CD4-positive, alpha-beta memory T cell (primary cell): ENCODE measurements at regions of chr4 and their contacts with region 1.

Region 1: GRCh38 chr4:153083447-153083947 is 120.7 kb upstream of the TRIM2 start:
- DNase-seq: peak; percentile 41 to 62 (median 56)
- H3K4me3 ChIP-seq: no peak overlapping the region
- H3K4me3 Mint-ChIP-seq: peak overlapping the region in 6 of 8 donors; percentile 1 to 83 (median 64)
- H3K27ac ChIP-seq: no peak overlapping the region
- H3K27ac Mint-ChIP-seq: peak overlapping the region in 5 of 7 donors; percentile 52 to 88 (median 65)
- H3K4me1 ChIP-seq: peaks cover 57% of the 10 kb centered on the region
- H3K4me1 Mint-ChIP-seq: peaks cover 30 to 56% (median 43%) of the 10 kb centered on the region in 4 donors
- H3K27me3 ChIP-seq: no peaks in the 10 kb centered on the region
- H3K27me3 Mint-ChIP-seq: peaks cover 0 to 3% of the 10 kb centered on the region in 2 donors

Region 2: DNA sequence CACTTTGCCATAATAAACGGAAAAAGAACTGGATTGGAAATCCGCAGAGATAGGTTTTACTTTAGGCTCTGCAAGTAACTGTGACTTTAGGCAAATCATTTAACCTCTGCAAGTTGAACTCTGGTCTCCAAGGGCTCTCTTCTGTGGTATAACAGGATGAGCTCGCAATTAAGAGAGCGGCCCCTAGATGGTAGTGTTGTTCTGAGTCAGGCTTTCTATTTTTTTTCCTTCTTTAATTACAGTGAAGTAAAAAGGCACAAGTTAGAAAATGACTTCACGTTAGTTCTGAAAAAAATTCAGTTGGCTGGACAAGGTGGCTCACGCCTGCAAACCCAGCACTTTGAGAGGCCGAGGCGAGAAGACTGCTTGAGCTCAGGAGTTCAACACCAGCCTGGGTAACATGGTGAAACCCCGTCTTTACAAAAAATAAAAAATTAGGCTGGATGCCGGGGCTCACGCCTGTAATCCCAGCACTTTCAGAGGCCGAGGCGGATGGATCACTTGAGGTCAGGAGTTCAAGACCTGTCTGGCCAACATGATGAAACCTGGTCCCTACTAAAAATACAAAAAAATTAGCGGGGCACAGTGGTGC is 1966.0 kb before region 1 on chr4:
- CTCF ChIA-PET with region 1: no interaction called
- POLR2A ChIA-PET with region 1: no interaction called
- intact Hi-C with region 1: loop called (anchors 10 kb)
- DNase-seq: peak; percentile 37 to 49 (median 45)
- H3K4me3 ChIP-seq: no peak overlapping the region
- H3K4me3 Mint-ChIP-seq: no peak overlapping the region
- H3K27ac ChIP-seq: no peak overlapping the region
- H3K27ac Mint-ChIP-seq: no peak overlapping the region
- H3K4me1 ChIP-seq: no peaks in the 10 kb centered on the region
- H3K4me1 Mint-ChIP-seq: peaks cover 0 to 4% (median 2%) of the 10 kb centered on the region in 4 donors
- H3K27me3 ChIP-seq: no peaks in the 10 kb centered on the region
- H3K27me3 Mint-ChIP-seq: no peaks in the 10 kb centered on the region

Region 3: GRCh38 chr4:152779513-152780266 is 303.8 kb before region 1 on chr4 and contains the starts of genes ARFIP1 and TIGD4:
- CTCF ChIA-PET with region 1: interaction called, 13 read pairs
- POLR2A ChIA-PET with region 1: no interaction called
- intact Hi-C with region 1: loop called (anchors 1 kb)
- DNase-seq: peak; percentile 93 to 95 (median 94)
- H3K4me3 ChIP-seq: peak within 1 kb of the TSS; percentile 94 to 96
- H3K4me3 Mint-ChIP-seq: peak within 1 kb of the TSS; percentile 92 to 100 (median 99)
- H3K27ac ChIP-seq: peak within 1 kb of the TSS; percentile 78
- H3K27ac Mint-ChIP-seq: peak within 1 kb of the TSS; percentile 93 to 99 (median 98)
- H3K4me1 ChIP-seq: peaks cover 27% of the 10 kb centered on the region
- H3K4me1 Mint-ChIP-seq: peaks cover 28 to 49% (median 40%) of the 10 kb centered on the region in 4 donors
- H3K27me3 ChIP-seq: no peaks in the 10 kb centered on the region
- H3K27me3 Mint-ChIP-seq: peaks cover 0 to 2% of the 10 kb centered on the region in 2 donors
- total RNA-seq, gene ARFIP1: 12.5 to 16.5 TPM
- total RNA-seq, gene TIGD4: 0.12 to 0.17 TPM

Region 4: DNA sequence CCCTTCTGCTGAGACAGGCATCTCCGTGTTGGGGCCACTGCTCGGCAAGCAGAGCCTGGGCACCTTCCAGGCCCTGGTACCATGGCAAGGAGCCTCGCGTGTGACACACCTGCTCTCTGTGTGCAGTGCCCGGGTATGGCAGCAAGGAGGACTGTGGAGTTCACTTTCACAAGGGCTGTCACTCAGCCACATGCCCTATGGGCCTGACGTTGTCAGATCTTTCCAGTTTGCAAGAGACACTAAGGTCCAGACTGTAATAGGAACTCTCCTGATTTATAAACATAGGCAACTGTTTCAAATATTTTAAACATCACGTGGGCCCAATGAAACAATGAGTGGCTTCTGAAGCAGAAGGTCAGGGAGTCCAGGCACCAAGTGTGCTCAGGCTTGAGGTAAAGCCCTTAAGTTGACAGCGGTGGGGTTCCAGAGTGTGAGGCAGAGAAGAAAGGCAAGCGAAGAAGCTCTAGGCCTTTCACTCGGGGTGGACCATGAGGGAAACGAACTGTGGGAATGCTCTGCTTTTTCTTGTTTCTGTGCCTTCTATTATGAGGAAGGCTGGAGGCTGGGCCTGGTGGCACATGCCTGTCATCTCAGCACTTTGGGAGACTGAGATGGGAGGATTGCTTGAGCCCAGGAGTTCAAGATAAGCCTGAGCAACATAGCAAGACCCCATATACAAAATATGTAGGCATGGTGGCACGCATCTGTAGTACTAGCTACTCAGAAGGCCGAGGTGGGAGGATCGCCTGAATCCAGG is 12.1 kb after region 1 on chr4:
- CTCF ChIA-PET with region 1: interaction called, 44 read pairs
- POLR2A ChIA-PET with region 1: no interaction called
- intact Hi-C with region 1: no loop called
- DNase-seq: no peak
- H3K4me3 ChIP-seq: no peak overlapping the region
- H3K4me3 Mint-ChIP-seq: no peak overlapping the region
- H3K27ac ChIP-seq: no peak overlapping the region
- H3K27ac Mint-ChIP-seq: peak overlapping the region in 3 of 7 donors; percentile 19 to 77 (median 50)
- H3K4me1 ChIP-seq: peaks cover 4% of the 10 kb centered on the region
- H3K4me1 Mint-ChIP-seq: peaks cover 2 to 9% (median 6%) of the 10 kb centered on the region in 4 donors
- H3K27me3 ChIP-seq: no peaks in the 10 kb centered on the region
- H3K27me3 Mint-ChIP-seq: no peaks in the 10 kb centered on the region

Region 5: DNA sequence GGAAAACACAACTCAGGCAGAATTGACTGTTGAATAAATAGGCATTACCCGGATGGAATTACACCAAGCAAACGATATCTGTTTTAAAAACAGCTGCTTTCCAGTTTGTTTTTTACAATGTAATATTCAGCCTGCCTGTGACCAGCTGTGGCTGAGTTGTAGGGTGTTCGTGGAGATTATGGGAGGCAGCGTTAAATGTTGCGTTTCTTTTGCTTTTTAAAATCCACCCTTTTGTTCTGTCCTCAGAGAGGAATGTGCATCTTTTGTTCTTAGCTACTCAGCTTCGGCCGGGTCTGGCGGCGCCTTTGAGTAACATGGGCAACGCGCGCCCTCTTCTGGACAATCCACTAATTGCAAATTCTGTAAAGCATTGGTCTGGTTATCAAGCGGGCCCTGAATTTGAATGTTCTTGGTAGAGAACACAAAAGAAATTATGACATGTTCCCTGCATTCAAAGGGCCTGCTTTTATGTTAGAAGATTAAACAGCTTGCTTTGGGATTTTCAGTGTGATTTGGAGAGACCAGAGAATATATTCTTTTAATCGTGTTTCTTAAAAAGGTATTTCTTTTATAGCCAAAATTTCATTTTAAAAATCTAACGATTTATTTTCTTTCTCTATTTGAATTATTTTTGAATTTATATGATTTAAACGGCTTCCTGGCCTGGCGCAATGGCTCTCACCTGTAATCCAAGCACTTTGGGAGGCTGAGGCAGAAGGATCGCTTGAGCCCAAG is 44.4 kb after region 1 on chr4:
- CTCF ChIA-PET with region 1: interaction called, 555 read pairs
- POLR2A ChIA-PET with region 1: interaction called, 50 read pairs
- intact Hi-C with region 1: loop called (anchors 1 kb)
- DNase-seq: peak; percentile 77 to 83 (median 82)
- H3K4me3 ChIP-seq: no peak overlapping the region
- H3K4me3 Mint-ChIP-seq: no peak overlapping the region
- H3K27ac ChIP-seq: no peak overlapping the region
- H3K27ac Mint-ChIP-seq: peak overlapping the region in 6 of 7 donors; percentile 8 to 75 (median 58)
- H3K4me1 ChIP-seq: peaks cover 6% of the 10 kb centered on the region
- H3K4me1 Mint-ChIP-seq: peaks cover 0 to 6% (median 2%) of the 10 kb centered on the region in 4 donors
- H3K27me3 ChIP-seq: no peaks in the 10 kb centered on the region
- H3K27me3 Mint-ChIP-seq: no peaks in the 10 kb centered on the region

Region 6: GRCh38 chr4:153318696-153319320 is 235.3 kb after region 1 on chr4:
- CTCF ChIA-PET with region 1: interaction called, 4 read pairs
- POLR2A ChIA-PET with region 1: no interaction called
- intact Hi-C with region 1: loop called (anchors 1 kb)
- DNase-seq: peak in 4 of 5 donors; percentile 36 to 49 (median 40)
- H3K4me3 ChIP-seq: no peak overlapping the region
- H3K4me3 Mint-ChIP-seq: no peak overlapping the region
- H3K27ac ChIP-seq: no peak overlapping the region
- H3K27ac Mint-ChIP-seq: no peak overlapping the region
- H3K4me1 ChIP-seq: no peaks in the 10 kb centered on the region
- H3K4me1 Mint-ChIP-seq: peaks cover 0 to 2% (median 0%) of the 10 kb centered on the region in 4 donors
- H3K27me3 ChIP-seq: no peaks in the 10 kb centered on the region
- H3K27me3 Mint-ChIP-seq: peaks cover 0 to 1% of the 10 kb centered on the region in 2 donors